Right ventricle myocardium superior (tissue), 1 donor: ENCODE measurements at regions of chr9 and their contacts with region 1.

Region 1: GRCh38 chr9:124126571-124127289 is 115.2 kb downstream of the LHX2 start:
- DNase-seq: peak; percentile 83
- ATAC-seq: peak; percentile 66

Region 2: DNA sequence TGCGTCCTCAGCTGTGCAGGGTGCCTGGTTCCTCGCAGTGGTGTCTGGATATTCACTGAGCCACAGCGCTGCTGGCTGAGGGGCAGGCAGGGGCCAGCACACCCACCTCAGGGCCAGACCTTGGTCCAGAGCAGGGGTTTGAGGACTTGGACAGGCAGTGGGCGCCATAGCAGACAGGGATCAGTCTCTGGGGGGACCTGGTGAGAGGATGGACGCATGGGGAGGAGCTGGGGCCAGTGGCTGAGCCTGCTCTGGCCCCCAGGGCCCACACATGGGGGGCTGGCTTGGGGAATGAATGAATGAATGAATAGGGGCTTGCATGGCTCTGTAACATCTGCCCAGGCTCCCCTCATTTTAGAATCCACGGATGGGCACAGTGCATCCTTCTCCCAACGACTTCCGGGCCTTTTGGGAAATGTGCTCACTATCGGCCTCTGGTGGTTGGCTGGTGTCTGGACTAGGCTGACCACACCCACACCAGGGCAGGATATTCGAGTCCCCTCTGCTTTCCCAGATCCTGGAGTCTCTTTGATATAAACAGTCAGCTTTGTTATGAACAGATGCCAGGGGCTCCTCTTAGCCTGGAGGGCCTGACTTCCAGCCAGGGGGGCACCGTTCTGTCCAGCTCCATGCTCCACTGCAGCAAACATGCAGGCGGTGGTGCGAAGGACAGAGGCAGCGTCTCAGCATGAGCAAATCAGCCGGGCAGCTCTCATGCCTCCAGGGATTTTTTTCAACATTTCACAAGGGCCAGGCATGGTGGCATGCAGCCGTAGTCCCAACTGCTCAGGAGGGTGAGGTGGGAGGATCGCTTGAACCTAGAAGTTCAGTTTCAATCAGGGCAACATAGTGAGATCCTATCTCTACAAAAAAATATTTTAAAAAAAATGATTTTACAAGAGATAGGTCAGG is 193.6 kb after region 1 on chr9:
- intact Hi-C with region 1: loop called (anchors 2 kb)
- DNase-seq: peak; percentile 77
- ATAC-seq: peak; percentile 94

Region 3: GRCh38 chr9:124537926-124538325 is 411.2 kb after region 1 on chr9:
- intact Hi-C with region 1: loop called (anchors 5 kb)
- DNase-seq: no peak
- ATAC-seq: no peak